ENCODE measurements at regions of chr12 and their contacts with region 1.

Region 1: DNA sequence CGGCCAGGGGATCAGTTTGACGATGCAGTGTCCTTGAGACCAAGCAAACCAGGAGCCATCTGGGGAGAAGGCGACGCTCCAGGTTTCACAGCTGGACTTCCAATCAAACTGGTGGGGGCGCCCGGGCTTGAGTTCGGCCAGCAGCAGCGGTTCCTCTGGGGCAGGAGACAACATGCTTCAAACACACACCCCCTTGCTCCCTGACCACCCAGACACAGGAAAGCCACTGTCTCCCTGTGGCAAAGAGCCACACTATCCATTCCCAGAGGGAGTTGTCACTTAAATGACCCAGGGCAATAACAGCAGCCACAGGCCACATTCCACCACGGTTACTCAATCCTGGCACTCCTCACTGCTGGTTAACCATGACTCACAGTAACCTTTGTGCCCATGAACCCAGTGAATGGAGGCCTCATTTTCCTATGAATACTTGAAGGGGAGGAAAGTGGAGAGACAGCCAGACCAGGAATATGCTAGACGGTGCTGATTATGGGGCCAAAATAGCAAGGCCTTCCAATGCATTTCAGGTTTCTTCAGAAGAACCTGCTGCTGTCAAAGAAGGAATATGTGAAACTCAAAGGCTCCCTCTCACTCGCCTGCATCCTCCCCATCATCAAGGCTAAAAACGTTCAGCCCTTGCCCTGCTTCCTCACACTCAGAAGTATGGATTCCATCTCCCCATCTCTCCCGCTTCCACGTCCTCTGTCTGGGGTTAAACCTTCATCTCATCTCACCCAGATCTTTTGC is 8.5 kb downstream of the WSB2 start:
- DNase-seq: peak; percentile 99
- ATAC-seq: peak; percentile 91
- H3K4me3 ChIP-seq: peak overlapping the region in 2 of 3 experiments; percentile 7 to 45; a peak in 2 of 6 replicates
- H3K27ac ChIP-seq: peak overlapping the region; percentile 91
- H3K4me1 ChIP-seq: peaks cover 65% of the 10 kb centered on the region
- H3K27me3 ChIP-seq: no peaks in the 10 kb centered on the region
- CTCF ChIP-seq: peak; percentile 46
- EP300 ChIP-seq: peak; percentile 65 to 90; a peak in 3 of 4 replicates
- POLR2A ChIP-seq: peak; percentile 42 to 73; a peak in 3 of 4 replicates
- RAD21 ChIP-seq: no peak; the same call in 1 of the 2 replicates

Region 2: GRCh38 chr12:117430246-117430645 is 622.3 kb before region 1 on chr12:
- CTCF ChIA-PET with region 1: no interaction called
- POLR2A ChIA-PET with region 1: no interaction called
- in situ Hi-C with region 1: no loop called
- intact Hi-C with region 1: no loop called
- DNase-seq: no peak
- ATAC-seq: no peak
- H3K4me3 ChIP-seq: no peak overlapping the region
- H3K27ac ChIP-seq: no peak overlapping the region
- H3K4me1 ChIP-seq: no peaks in the 10 kb centered on the region
- H3K27me3 ChIP-seq: no peaks in the 10 kb centered on the region
- CTCF ChIP-seq: no peak
- EP300 ChIP-seq: no peak
- POLR2A ChIP-seq: no peak
- RAD21 ChIP-seq: no peak

Region 3: DNA sequence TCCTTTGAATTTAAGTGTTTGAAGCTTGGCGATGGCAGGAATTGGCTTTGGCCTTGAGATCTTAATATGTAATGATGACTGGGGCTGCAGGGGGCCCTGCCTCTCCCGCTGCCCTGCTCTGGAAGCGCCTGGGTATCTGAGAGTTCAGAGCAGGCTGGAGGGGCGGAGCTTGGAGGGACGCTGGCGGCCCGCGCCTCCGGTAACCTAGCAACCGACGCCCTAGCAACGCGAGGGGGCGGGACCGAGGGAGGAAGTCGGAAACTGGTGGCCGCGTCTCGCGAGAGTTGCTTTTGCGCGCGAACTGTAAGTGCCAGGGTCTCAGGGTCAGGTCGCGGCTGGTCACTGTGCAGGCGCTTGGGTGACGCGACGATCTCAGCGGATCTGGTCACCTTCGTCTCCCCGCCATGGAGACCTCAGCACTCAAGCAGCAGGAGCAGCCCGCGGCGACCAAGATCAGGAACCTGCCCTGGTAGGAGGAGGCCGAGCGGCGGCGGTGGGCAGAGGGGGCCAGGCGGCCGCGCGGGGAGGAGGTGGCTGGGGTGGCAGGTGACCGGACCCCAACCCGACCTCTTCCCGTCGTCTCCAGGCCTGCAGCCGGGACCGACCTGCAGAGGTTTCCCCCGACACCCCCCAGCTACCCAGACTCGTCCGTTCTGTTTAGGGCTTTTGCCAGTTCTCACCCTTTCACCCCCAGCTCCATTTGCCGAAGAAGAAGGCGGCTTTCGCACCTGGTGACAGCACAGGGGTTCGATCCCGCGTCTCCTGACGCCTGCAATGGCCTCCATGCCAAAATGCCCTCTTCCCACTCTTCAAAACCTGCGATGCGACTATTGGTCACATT is 35.9 kb before region 1 on chr12 and contains the start of gene RFC5:
- CTCF ChIA-PET with region 1: no interaction called
- POLR2A ChIA-PET with region 1: no interaction called
- in situ Hi-C with region 1: no loop called
- intact Hi-C with region 1: loop called (anchors 2 kb)
- DNase-seq: peak; percentile 96
- ATAC-seq: peak; percentile 97
- H3K4me3 ChIP-seq: peak within 1 kb of the TSS; percentile 72 to 90 (median 89)
- H3K27ac ChIP-seq: peak within 1 kb of the TSS; percentile 75
- H3K4me1 ChIP-seq: peaks cover 35% of the 10 kb centered on the region
- H3K27me3 ChIP-seq: no peaks in the 10 kb centered on the region
- CTCF ChIP-seq: 0 out of 2 replicates have a peak, but pooled peaks have one; percentile 9
- EP300 ChIP-seq: no peak
- POLR2A ChIP-seq: peak; percentile 88 to 92
- RAD21 ChIP-seq: no peak
- total RNA-seq, gene RFC5: 51.4 and 66.2 TPM in 2 replicates

Region 4: GRCh38 chr12:118035246-118036041 is 17.1 kb before region 1 on chr12:
- CTCF ChIA-PET with region 1: no interaction called
- POLR2A ChIA-PET with region 1: interaction called, 3 read pairs
- in situ Hi-C with region 1: no loop called
- intact Hi-C with region 1: loop called (anchors 2 kb)
- DNase-seq: no peak
- ATAC-seq: peak; percentile 52
- H3K4me3 ChIP-seq: no peak overlapping the region
- H3K27ac ChIP-seq: no peak overlapping the region
- H3K4me1 ChIP-seq: peaks cover 15% of the 10 kb centered on the region
- H3K27me3 ChIP-seq: no peaks in the 10 kb centered on the region
- CTCF ChIP-seq: no peak
- EP300 ChIP-seq: no peak
- POLR2A ChIP-seq: no peak
- RAD21 ChIP-seq: no peak

Region 5: GRCh38 chr12:118127867-118128266 is 75.4 kb after region 1 on chr12:
- CTCF ChIA-PET with region 1: no interaction called
- POLR2A ChIA-PET with region 1: no interaction called
- in situ Hi-C with region 1: no loop called
- intact Hi-C with region 1: no loop called
- DNase-seq: no peak
- ATAC-seq: no peak
- H3K4me3 ChIP-seq: no peak overlapping the region
- H3K27ac ChIP-seq: no peak overlapping the region
- H3K4me1 ChIP-seq: peaks cover 83% of the 10 kb centered on the region
- H3K27me3 ChIP-seq: no peaks in the 10 kb centered on the region
- CTCF ChIP-seq: no peak
- EP300 ChIP-seq: no peak
- POLR2A ChIP-seq: no peak
- RAD21 ChIP-seq: no peak

Region 6: GRCh38 chr12:118391424-118391823 is 338.9 kb after region 1 on chr12:
- CTCF ChIA-PET with region 1: no interaction called
- POLR2A ChIA-PET with region 1: no interaction called
- in situ Hi-C with region 1: no loop called
- intact Hi-C with region 1: no loop called
- DNase-seq: no peak
- ATAC-seq: no peak
- H3K4me3 ChIP-seq: no peak overlapping the region
- H3K27ac ChIP-seq: no peak overlapping the region
- H3K4me1 ChIP-seq: no peaks in the 10 kb centered on the region
- H3K27me3 ChIP-seq: no peaks in the 10 kb centered on the region
- CTCF ChIP-seq: no peak
- EP300 ChIP-seq: no peak
- POLR2A ChIP-seq: no peak
- RAD21 ChIP-seq: no peak

Measured in HepG2 (cell line).